Caco-2 (cell line): ENCODE measurements at regions of chr16 and their contacts with region 1.

Region 1: DNA sequence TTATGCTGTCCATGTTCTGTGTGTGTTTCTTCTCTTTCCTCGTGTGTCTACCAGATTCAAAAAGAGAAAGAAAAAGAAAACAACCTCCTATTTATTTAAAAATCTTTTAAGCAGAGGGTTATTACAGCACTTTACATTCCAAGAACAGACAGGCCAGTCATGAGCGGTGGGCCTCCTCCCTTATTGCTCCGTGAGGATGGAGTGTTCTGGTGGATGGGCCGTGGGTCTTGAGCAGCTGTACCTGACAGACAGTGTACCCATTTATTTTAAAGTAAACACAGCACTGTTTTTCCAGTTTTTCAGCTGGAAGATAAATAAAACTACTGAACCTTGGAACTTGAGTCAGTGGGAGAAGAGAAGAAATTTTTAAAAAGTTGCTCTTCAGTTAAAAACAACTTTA is 52.4 kb downstream of the WWP2 start:
- DNase-seq: peak in 1 of 2 experiments; percentile 46
- H3K4me3 ChIP-seq: no peak overlapping the region
- H3K4me3 Mint-ChIP-seq: no peak overlapping the region
- H3K27ac Mint-ChIP-seq: peak overlapping the region; percentile 52
- H3K4me1 ChIP-seq: peaks cover 8% of the 10 kb centered on the region; the same call in 1 of the 2 replicates
- H3K4me1 Mint-ChIP-seq: peaks cover 8% of the 10 kb centered on the region
- H3K27me3 ChIP-seq: no peaks in the 10 kb centered on the region
- H3K27me3 Mint-ChIP-seq: no peaks in the 10 kb centered on the region
- CTCF ChIP-seq: no peak

Region 2: DNA sequence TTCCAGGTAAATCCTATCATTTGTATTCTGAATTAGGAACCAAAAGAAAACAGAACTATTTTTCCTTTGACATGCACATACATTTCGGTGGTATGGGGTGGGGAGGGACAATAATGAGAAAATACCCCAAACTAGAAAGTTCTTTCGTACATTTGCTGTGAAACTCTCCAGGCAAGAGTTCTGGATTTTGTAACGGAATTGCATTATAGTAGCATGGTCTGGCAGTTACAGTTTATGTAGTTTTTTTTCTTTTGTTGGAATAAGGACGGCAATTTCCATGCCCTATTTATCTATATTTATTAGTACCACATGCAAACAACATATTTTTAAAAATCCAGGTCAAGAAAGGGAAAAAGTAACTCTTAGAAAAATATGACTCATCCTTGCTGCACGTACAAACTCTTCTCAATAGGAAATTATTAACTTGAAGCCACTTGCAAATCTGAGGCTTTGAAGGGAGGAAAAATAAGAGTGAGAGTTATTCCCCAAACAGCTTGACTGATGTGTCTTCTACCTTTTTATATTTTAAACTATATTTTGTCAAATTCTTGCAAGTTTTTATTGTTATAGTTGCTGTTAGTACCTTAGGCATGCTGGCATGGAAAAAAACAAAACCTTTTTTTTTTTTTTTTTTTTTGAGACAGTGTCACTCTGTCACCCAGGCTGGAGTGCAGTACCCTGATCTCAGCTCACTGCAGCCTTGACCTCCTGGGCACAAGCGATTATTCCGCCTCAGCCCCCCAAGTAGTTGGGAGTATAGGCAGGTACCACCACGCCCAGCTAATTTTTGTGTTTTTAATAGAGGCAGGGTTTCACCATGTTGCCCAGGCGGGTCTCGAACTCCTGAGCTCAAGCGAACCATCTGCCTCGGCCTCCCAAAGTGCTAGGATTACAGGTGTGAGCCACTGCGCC is 16.9 kb after region 1 on chr16:
- CTCF ChIA-PET with region 1: no interaction called
- POLR2A ChIA-PET with region 1: no interaction called
- intact Hi-C with region 1: loop called (anchors 2 kb)
- DNase-seq: no peak
- H3K4me3 ChIP-seq: no peak overlapping the region
- H3K4me3 Mint-ChIP-seq: peak overlapping the region; percentile 31
- H3K27ac Mint-ChIP-seq: peak overlapping the region; percentile 87
- H3K4me1 ChIP-seq: peaks cover 35% of the 10 kb centered on the region
- H3K4me1 Mint-ChIP-seq: peaks cover 31% of the 10 kb centered on the region
- H3K27me3 ChIP-seq: no peaks in the 10 kb centered on the region
- H3K27me3 Mint-ChIP-seq: no peaks in the 10 kb centered on the region
- CTCF ChIP-seq: no peak

Region 3: DNA sequence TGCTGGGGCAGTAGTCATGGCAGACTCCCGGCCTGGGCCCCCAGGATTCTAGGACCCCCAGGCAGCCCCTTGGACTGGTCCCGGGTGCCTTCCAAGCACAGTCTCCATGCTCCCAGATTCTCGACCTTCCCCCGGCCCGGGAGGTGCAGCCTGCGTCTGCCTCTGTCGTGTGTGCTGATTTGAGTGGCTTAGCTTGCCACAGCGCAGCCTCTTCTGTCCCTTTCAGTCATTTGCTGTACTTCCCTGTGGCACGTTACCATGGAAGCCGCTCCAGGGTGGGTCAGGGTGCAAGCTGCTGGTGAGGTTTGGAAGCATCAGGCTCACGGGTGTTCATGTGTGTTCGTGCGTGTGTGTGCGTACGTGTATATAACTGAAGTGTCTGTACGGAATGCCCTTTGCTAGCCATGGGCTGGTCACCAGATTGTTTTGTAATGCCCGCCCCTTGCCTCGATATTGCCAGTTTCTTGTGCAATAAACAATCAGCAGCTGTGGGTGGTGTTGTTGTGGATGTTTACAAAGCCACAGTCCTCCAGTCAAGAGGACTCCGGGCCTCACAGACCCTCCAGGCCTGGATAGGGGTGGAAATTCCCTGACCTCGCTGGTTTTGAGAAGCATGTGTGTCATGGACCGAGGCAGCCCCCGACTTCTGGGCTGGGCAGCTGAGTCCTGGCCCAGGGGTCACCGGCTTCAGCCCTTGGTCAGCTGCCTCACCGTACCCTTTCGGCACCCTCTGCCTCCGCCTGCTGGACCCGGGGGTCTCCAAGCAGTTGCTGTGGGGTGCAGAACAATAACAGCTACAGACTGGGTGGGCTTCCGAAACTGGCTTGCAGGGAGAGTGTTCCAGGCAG is 126.9 kb after region 1 on chr16:
- CTCF ChIA-PET with region 1: no interaction called
- POLR2A ChIA-PET with region 1: no interaction called
- intact Hi-C with region 1: no loop called
- DNase-seq: no peak
- H3K4me3 ChIP-seq: no peak overlapping the region
- H3K4me3 Mint-ChIP-seq: no peak overlapping the region
- H3K27ac Mint-ChIP-seq: no peak overlapping the region
- H3K4me1 ChIP-seq: no peaks in the 10 kb centered on the region
- H3K4me1 Mint-ChIP-seq: no peaks in the 10 kb centered on the region
- H3K27me3 ChIP-seq: no peaks in the 10 kb centered on the region
- H3K27me3 Mint-ChIP-seq: no peaks in the 10 kb centered on the region
- CTCF ChIP-seq: no peak